Tibial artery (tissue), 4 donors: ENCODE measurements at regions of chr20 and their contacts with region 1.

Region 1: GRCh38 chr20:41173161-41173721 is 35.9 kb downstream of the PLCG1 start:
- DNase-seq: peak; percentile 90 to 93
- H3K4me3 ChIP-seq: no peak overlapping the region
- H3K27ac ChIP-seq: peak overlapping the region; percentile 73 to 83
- H3K4me1 ChIP-seq: peaks cover 0 to 64% (median 62%) of the 10 kb centered on the region in 4 donors
- H3K27me3 ChIP-seq: no peaks in the 10 kb centered on the region
- CTCF ChIP-seq: peak; percentile 97

Region 2: GRCh38 chr20:40654876-40655275 is 518.4 kb before region 1 on chr20:
- intact Hi-C with region 1: no loop called
- DNase-seq: peak; percentile 69 to 87
- H3K4me3 ChIP-seq: no peak overlapping the region
- H3K27ac ChIP-seq: no peak overlapping the region
- H3K4me1 ChIP-seq: no peaks in the 10 kb centered on the region
- H3K27me3 ChIP-seq: no peaks in the 10 kb centered on the region
- CTCF ChIP-seq: no peak

Region 3: DNA sequence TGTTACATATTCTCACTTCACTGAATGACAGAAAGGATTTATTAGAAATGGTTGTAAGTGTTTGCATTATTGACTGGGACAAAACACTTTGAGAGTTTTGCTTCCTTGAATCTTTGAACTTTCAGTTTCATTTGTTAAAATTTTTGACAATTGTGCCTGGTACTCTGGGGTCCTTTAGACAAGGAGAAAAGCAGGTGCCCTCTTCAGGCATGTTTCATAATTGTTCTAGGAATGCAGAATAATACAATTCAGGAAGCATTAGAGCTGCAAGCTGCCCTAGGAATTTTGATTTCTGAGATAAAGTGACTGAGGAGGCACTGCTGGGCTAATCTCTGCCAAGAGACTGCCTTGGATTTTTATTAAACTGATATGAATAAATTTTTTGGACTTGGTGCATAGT is 94.9 kb before region 1 on chr20:
- intact Hi-C with region 1: no loop called
- DNase-seq: no peak
- H3K4me3 ChIP-seq: no peak overlapping the region
- H3K27ac ChIP-seq: peak overlapping the region in 1 of 2 donors; percentile 13
- H3K4me1 ChIP-seq: peaks cover 0 to 64% (median 30%) of the 10 kb centered on the region in 4 donors
- H3K27me3 ChIP-seq: no peaks in the 10 kb centered on the region
- CTCF ChIP-seq: peak; percentile 49 to 61

Region 4: GRCh38 chr20:41232973-41233926 is 60.0 kb after region 1 on chr20:
- intact Hi-C with region 1: loop called (anchors 2 kb)
- DNase-seq: no peak
- H3K4me3 ChIP-seq: no peak overlapping the region
- H3K27ac ChIP-seq: peak overlapping the region; percentile 65 to 83
- H3K4me1 ChIP-seq: peaks cover 0 to 64% (median 39%) of the 10 kb centered on the region in 4 donors
- H3K27me3 ChIP-seq: no peaks in the 10 kb centered on the region
- CTCF ChIP-seq: no peak

Region 5: GRCh38 chr20:41249406-41250281 is 76.4 kb after region 1 on chr20:
- intact Hi-C with region 1: loop called (anchors 5 kb)
- DNase-seq: peak; percentile 83 to 92
- H3K4me3 ChIP-seq: peak overlapping the region in 1 of 2 donors; percentile 1
- H3K27ac ChIP-seq: peak overlapping the region; percentile 86 to 90
- H3K4me1 ChIP-seq: peaks cover 10 to 91% (median 61%) of the 10 kb centered on the region in 4 donors
- H3K27me3 ChIP-seq: no peaks in the 10 kb centered on the region
- CTCF ChIP-seq: peak; percentile 19 to 35

Region 6: DNA sequence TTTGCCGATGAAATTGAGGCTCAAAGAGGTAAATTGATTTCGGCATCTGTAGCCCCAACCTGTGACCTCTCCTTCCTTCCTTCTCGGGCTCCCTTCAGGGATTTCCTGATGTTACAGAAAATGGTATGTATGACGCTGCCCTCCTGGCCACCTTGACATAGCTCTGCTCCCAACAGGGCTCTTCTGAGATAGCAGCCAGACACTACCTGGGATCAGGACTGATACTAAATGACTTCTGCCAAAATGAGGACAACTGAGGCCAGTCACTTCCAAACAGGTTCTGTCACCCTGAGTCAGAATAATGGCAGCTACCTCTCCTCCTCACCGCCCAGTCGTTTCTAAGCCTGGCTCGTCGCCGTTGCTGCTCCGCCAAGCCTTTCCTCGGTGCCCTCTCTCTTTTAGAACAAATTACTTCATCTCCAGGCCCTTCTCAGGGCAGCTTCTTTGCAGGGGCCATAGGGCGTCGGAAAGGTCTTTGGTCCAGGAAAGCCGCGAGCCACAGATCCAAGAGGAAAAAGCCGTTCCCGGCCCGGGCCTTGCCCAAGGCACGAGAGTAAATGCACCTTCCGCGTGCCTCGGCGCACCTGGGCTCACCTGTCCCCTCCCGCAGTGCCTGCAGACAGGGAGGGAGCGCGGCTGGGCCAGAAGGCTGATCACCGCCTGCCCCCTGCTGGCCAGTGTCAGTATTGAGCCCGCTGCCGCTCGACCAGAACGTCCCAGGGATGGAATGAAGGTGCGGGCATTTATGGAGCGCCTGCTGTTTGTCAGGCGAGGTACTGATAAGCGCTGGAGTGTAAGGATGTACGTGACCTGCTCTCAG is 166.5 kb after region 1 on chr20:
- intact Hi-C with region 1: loop called (anchors 2 kb)
- DNase-seq: peak; percentile 75 to 89
- H3K4me3 ChIP-seq: peak overlapping the region; percentile 45 to 57
- H3K27ac ChIP-seq: peak overlapping the region; percentile 82 to 84
- H3K4me1 ChIP-seq: peaks cover 0 to 49% (median 25%) of the 10 kb centered on the region in 4 donors
- H3K27me3 ChIP-seq: no peaks in the 10 kb centered on the region
- CTCF ChIP-seq: peak; percentile 99